ENCODE measurements at regions of chr16 and their contacts with region 1.

Region 1: DNA sequence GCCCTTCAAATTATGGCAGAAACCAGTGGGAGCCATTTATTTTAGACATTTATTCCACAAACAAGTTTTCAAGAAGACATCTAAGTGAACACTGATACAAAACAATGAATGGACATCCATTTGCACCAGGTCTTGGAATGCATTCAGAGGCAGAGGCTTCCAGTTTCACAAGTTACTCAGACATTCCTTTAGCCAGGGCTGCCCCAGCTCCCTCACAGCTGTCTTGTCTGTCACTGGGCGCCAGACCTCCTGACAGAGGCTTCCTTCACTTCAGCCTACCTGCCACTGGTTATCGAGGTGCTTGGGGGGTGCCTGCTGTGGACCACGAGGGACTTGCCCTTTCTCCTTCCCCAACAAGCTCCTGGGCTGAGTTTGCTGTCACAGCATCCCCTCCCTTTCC is 19.2 kb downstream of the AQP8 start:
- DNase-seq: no peak
- H3K4me3 Mint-ChIP-seq: no peak overlapping the region
- H3K27ac Mint-ChIP-seq: no peak overlapping the region
- H3K4me1 Mint-ChIP-seq: no peaks in the 10 kb centered on the region
- H3K27me3 Mint-ChIP-seq: no peaks in the 10 kb centered on the region

Region 2: GRCh38 chr16:25126820-25127232 is 109.2 kb before region 1 on chr16:
- intact Hi-C with region 1: loop called (anchors 2 kb)
- DNase-seq: peak; percentile 6
- H3K4me3 Mint-ChIP-seq: no peak overlapping the region
- H3K27ac Mint-ChIP-seq: peak overlapping the region; percentile 80
- H3K4me1 Mint-ChIP-seq: peaks cover 29% of the 10 kb centered on the region
- H3K27me3 Mint-ChIP-seq: no peaks in the 10 kb centered on the region

Region 3: GRCh38 chr16:25257504-25257955 is 21.5 kb after region 1 on chr16 and contains the start of gene ZKSCAN2:
- intact Hi-C with region 1: loop called (anchors 1 kb)
- DNase-seq: peak; percentile 83
- H3K4me3 Mint-ChIP-seq: peak within 1 kb of the TSS; percentile 91
- H3K27ac Mint-ChIP-seq: peak within 1 kb of the TSS; percentile 97
- H3K4me1 Mint-ChIP-seq: peaks cover 53% of the 10 kb centered on the region
- H3K27me3 Mint-ChIP-seq: peaks cover 2% of the 10 kb centered on the region
- total RNA-seq, gene ZKSCAN2: 6.1 and 6.4 TPM in 2 replicates

Region 4: GRCh38 chr16:27109666-27110523 is 1873.9 kb after region 1 on chr16:
- intact Hi-C with region 1: loop called (anchors 2 kb)
- DNase-seq: peak; percentile 62
- H3K4me3 Mint-ChIP-seq: peak overlapping the region; percentile 64
- H3K27ac Mint-ChIP-seq: no peak overlapping the region
- H3K4me1 Mint-ChIP-seq: no peaks in the 10 kb centered on the region
- H3K27me3 Mint-ChIP-seq: peaks cover 6% of the 10 kb centered on the region

Measured in activated T-helper 1 cell treated with anti-CD3 and anti-CD28 coated beads, Interleukin-12 subunit alpha, Interleukin-12 subunit beta, Interleukin-2, Interleukin-4 antibody, amounts not matched to agents 30 ng/mL and 10 ng/mL and 1 ng/mL, durations not matched to agents 14 hours and 24 hours and 36 hours (primary cell).